Sigmoid colon (tissue), 7 donors: ENCODE measurements at regions of chr10 and their contacts with region 1.

Region 1: DNA sequence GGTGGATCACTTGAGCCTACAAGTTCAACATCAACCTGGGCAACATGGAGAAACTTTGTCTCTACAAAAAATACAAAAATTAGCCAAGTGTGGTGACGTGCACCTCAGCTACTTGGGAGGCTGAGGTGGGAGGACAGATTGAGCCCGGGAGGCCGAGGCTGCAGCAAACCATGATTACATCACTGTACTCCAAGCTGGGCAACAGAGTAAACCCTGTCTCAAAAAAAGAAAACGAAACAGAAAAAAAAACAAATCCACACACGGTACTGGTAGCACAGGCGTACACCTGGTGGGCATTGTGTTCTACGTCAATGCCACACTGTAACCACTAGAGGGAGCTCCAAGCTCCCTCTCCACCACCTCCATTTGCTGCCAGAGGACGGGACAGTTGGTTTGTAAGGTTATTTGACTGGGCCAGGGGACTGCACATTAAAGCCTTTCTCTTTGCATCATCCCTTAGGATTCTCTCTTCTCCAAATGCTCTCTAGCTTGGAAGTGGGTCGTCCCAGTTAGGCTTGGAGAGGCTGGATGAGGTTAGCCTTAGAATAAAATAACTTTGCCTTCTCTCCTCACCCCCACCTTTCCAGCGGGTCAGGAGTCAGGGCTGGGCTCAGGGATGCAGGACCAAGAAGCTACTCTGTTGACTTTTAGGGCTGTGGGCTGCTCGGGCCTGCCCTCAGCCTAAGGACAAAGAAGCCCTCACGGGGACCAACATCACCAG is 130.8 kb downstream of the SORBS1 start:
- DNase-seq: peak; percentile 86
- H3K4me3 ChIP-seq: no peak overlapping the region
- H3K27ac ChIP-seq: peak overlapping the region; percentile 84 to 98 (median 90)
- H3K4me1 ChIP-seq: peaks cover 0 to 97% (median 93%) of the 10 kb centered on the region in 4 donors
- H3K27me3 ChIP-seq: no peaks in the 10 kb centered on the region
- CTCF ChIP-seq: peak; percentile 90 to 93 (median 92)
- EP300 ChIP-seq: no peak
- POLR2A ChIP-seq: no peak

Region 2: GRCh38 chr10:94983555-94983954 is 446.8 kb before region 1 on chr10:
- intact Hi-C with region 1: no loop called
- DNase-seq: no peak
- H3K4me3 ChIP-seq: no peak overlapping the region
- H3K27ac ChIP-seq: no peak overlapping the region
- H3K4me1 ChIP-seq: no peaks in the 10 kb centered on the region
- H3K27me3 ChIP-seq: no peaks in the 10 kb centered on the region
- CTCF ChIP-seq: no peak
- EP300 ChIP-seq: no peak
- POLR2A ChIP-seq: no peak

Region 3: DNA sequence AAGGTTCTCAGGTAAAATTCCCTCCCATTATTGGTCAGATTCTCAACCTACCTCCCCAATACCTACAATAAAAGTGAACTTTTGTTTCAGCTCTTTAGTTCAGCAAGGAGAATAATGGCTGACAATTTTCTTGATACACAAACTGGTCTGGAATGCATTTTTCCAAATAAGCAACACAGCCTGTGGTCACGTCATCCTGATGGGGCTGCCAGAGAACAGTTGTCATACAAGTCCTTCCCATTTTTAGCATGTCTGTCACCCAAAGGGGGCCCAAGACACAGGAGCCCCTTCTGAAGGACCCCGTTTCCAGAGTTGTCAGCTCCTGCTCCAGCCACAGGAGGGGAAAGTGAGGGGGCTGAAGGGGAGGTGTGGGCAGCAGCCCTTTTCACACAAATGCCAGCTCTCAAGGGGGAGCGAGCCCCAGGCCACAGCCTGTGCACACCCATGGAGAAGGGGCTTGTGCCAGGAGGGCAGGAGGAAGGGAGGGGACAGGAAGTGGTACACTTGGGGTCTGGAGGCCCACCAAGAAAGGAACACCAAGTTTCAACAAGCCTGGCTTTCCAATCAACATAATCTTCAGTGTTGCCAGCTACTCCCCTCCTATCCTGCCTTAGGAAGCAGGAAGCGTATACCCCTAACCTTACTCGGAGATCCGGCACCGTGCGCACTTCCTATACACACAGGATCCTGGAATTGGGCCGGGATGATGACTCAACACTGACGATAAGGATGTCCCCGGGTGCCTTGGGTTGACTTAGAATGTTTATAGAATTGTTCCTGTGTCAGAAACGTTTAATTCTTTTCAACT is 96.2 kb before region 1 on chr10:
- intact Hi-C with region 1: no loop called
- DNase-seq: peak; percentile 88
- H3K4me3 ChIP-seq: no peak overlapping the region
- H3K27ac ChIP-seq: peak overlapping the region; percentile 77 to 90 (median 87)
- H3K4me1 ChIP-seq: peaks cover 0 to 70% (median 62%) of the 10 kb centered on the region in 4 donors
- H3K27me3 ChIP-seq: no peaks in the 10 kb centered on the region
- CTCF ChIP-seq: no peak
- EP300 ChIP-seq: peak in 2 of 4 donors; percentile 64 to 80
- POLR2A ChIP-seq: no peak

Region 4: GRCh38 chr10:95374597-95375209 is 55.7 kb before region 1 on chr10:
- intact Hi-C with region 1: loop called (anchors 5 kb)
- DNase-seq: peak; percentile 90
- H3K4me3 ChIP-seq: no peak overlapping the region
- H3K27ac ChIP-seq: peak overlapping the region; percentile 34 to 96 (median 72)
- H3K4me1 ChIP-seq: peaks cover 0 to 74% (median 56%) of the 10 kb centered on the region in 4 donors
- H3K27me3 ChIP-seq: no peaks in the 10 kb centered on the region
- CTCF ChIP-seq: peak; percentile 84 to 92 (median 90)
- EP300 ChIP-seq: no peak
- POLR2A ChIP-seq: no peak

Region 5: GRCh38 chr10:95536017-95536416 is 105.6 kb after region 1 on chr10:
- intact Hi-C with region 1: no loop called
- DNase-seq: peak; percentile 95
- H3K4me3 ChIP-seq: no peak overlapping the region
- H3K27ac ChIP-seq: peak overlapping the region; percentile 93 to 98 (median 96)
- H3K4me1 ChIP-seq: peaks cover 0 to 100% (median 95%) of the 10 kb centered on the region in 4 donors
- H3K27me3 ChIP-seq: no peaks in the 10 kb centered on the region
- CTCF ChIP-seq: peak in 1 of 4 experiments; percentile 27
- EP300 ChIP-seq: peak; percentile 98 to 100 (median 99)
- POLR2A ChIP-seq: no peak